PC-9 (cell line): ENCODE measurements at regions of chr10 and their contacts with region 1.

Region 1: DNA sequence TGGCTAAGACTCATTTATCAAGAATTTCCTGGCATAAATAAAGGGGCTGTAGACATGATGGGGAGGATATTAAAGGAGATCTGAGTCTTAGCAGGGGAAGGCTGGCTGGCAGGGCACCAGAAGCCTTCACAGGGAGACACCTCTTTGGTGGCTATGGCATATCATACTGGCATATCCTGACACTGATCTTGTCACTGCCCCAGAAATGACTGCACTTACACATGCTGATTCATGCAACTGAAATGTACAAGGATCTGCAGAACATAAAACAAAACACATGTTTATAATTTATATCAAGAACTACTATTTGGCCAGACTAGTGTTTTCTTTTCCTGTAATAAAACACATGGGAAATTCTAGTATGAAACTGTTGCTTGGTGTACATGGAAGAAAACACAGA is 5.5 kb upstream of the LIPN start:
- DNase-seq: no peak
- H3K4me3 ChIP-seq: no peak overlapping the region
- H3K27ac ChIP-seq: no peak overlapping the region
- H3K4me1 ChIP-seq: no peaks in the 10 kb centered on the region
- H3K27me3 ChIP-seq: no peaks in the 10 kb centered on the region
- CTCF ChIP-seq: no peak

Region 2: GRCh38 chr10:88769384-88769783 is 15.1 kb after region 1 on chr10:
- CTCF ChIA-PET with region 1: no interaction called
- POLR2A ChIA-PET with region 1: no interaction called
- intact Hi-C with region 1: loop called (anchors 1 kb)
- DNase-seq: no peak
- H3K4me3 ChIP-seq: no peak overlapping the region
- H3K27ac ChIP-seq: no peak overlapping the region
- H3K4me1 ChIP-seq: no peaks in the 10 kb centered on the region
- H3K27me3 ChIP-seq: no peaks in the 10 kb centered on the region
- CTCF ChIP-seq: no peak